AG04450 (cell line): ENCODE measurements at regions of chr16 and their contacts with region 1.

Region 1: DNA sequence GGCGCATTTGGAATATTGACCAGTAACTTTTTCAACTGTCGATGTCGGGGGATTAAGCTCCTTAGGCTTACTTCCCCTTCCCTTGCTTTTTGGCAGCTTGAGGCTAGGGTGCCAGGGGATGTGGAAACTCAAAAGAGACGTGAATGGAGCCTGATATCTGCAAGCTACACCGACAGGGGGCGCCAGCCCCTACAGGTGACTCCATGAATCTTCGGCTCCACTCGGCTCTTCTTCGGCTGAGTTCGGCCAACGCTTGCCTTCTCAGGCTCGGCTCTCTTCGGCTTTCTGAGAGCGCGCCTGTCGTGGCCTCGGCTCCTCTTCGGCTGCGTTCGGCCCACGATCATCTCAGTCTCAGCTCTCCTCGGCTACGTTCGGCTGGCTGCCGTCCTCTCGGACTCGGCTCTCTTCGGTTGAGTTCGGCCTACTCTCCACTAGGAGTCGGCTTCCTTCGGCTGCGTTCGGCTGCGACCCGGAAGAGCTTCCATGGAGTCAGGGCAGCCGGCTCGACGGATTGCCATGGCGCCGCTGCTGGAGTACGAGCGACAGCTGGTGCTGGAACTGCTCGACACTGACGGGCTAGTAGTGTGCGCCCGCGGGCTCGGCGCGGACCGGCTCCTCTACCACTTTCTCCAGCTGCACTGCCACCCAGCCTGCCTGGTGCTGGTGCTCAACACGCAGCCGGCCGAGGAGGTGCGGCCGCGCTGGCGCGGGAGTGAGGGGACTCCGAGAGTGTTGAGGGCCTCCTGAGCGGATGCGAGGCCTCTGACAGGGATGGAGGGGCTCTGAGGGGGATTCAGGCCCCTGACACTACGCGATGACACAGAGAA is at the start of gene ERCC4:
- DNase-seq: peak; percentile 99
- H3K4me3 ChIP-seq: peak within 1 kb of the TSS; percentile 98
- H3K27ac ChIP-seq: peak within 1 kb of the TSS; percentile 66
- H3K27me3 ChIP-seq: no peaks in the 10 kb centered on the region
- CTCF ChIP-seq: peak; percentile 94
- polyA plus RNA-seq, gene ERCC4: 9.8 and 11.4 TPM in 2 replicates

Region 2: DNA sequence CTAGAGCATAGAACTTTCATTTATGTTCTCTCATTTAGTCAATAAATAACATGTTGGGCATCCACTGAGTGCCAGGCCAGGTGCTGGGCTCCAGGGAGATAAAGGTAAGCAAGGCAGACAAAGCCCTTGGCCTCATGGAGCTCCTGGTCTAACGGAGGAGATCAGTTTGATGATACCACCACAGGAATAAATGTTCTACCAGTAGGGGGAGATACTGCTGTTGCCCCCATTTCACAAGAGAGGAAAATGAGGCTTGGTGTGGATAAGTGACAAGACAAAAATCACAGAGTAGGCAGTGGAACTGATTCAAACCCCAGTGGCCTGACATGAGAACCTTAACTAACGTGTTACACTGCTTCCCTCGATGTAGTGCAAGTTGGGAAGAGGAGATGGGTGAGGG is 80.3 kb before region 1 on chr16:
- CTCF ChIA-PET with region 1: no interaction called
- POLR2A ChIA-PET with region 1: no interaction called
- DNase-seq: no peak
- H3K4me3 ChIP-seq: no peak overlapping the region
- H3K27ac ChIP-seq: no peak overlapping the region
- H3K27me3 ChIP-seq: no peaks in the 10 kb centered on the region
- CTCF ChIP-seq: no peak

Region 3: GRCh38 chr16:13902677-13903076 is 17.2 kb before region 1 on chr16:
- CTCF ChIA-PET with region 1: interaction called, 66 read pairs
- POLR2A ChIA-PET with region 1: no interaction called
- DNase-seq: no peak
- H3K4me3 ChIP-seq: no peak overlapping the region
- H3K27ac ChIP-seq: no peak overlapping the region
- H3K27me3 ChIP-seq: peaks cover 2% of the 10 kb centered on the region
- CTCF ChIP-seq: no peak

Region 4: DNA sequence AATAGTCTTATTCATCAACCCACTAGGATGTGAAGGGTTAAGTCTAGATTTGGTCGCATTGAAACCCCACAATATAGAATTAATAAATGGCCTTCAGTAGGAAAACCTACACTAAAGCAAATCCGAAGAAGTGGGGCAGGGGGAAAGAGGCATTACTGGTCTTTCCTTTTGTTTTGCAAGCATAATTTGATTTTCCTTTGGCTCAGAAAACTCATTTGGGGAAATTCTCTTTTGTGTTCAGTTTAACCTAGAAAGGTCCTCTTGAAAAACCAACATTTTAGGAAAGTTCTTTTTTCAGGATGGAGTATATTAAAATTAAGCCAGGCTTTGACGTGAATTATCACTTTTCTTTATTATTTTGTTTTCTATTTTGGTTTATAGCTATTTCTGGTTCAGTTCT is 31.7 kb after region 1 on chr16:
- CTCF ChIA-PET with region 1: interaction called, 17 read pairs
- POLR2A ChIA-PET with region 1: no interaction called
- DNase-seq: no peak
- H3K4me3 ChIP-seq: no peak overlapping the region
- H3K27ac ChIP-seq: no peak overlapping the region
- H3K27me3 ChIP-seq: no peaks in the 10 kb centered on the region
- CTCF ChIP-seq: no peak

Region 5: DNA sequence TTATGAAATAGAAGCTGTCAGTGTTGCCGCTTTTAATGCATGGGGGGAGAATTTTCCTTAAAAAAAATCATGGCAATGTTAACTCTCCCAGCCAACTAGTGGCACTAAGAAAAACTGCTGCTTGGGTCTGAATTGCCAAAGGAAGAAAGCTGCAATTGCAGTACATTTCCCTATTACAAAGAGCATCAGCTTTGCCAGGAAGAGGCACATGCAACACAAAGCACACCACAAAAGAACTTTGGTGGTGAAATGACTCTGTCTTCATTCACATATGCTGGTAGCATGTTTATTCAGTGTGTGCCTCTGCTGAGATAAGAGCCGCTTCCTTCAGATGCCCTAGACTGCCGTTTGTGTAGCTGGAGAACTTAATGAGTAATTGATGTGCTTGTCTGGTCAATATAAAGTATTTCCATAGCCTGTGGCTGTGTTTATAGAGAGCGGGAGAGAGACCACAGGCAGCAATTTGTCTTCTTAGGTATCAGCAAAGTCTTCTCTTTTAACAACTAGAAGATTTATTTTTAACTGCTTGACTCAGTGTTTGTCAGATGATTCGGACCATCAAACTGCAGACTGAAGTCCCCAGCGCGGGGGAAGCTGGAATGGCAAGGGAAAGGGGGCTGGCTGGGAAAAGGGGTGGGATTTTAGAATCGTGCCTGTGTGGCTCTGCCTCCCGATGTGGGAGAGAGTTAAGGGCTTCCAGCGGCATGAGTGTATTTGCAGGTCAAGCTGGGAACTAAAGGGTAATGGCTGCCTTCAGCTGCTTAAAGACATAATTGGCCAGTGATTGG is 266.3 kb after region 1 on chr16:
- CTCF ChIA-PET with region 1: interaction called, 13 read pairs
- POLR2A ChIA-PET with region 1: no interaction called
- DNase-seq: peak; percentile 36
- H3K4me3 ChIP-seq: peak overlapping the region; percentile 43
- H3K27ac ChIP-seq: peak overlapping the region; percentile 59
- H3K27me3 ChIP-seq: no peaks in the 10 kb centered on the region
- CTCF ChIP-seq: peak; percentile 69

Region 6: GRCh38 chr16:14232106-14232864 is 312.4 kb after region 1 on chr16:
- CTCF ChIA-PET with region 1: interaction called, 12 read pairs
- POLR2A ChIA-PET with region 1: no interaction called
- DNase-seq: peak; percentile 45
- H3K4me3 ChIP-seq: no peak overlapping the region
- H3K27ac ChIP-seq: no peak overlapping the region
- H3K27me3 ChIP-seq: no peaks in the 10 kb centered on the region
- CTCF ChIP-seq: no peak

Region 7: GRCh38 chr16:14285513-14286385 is 365.9 kb after region 1 on chr16:
- CTCF ChIA-PET with region 1: interaction called, 18 read pairs
- POLR2A ChIA-PET with region 1: interaction called, 3 read pairs
- DNase-seq: peak; percentile 95
- H3K4me3 ChIP-seq: peak overlapping the region; percentile 81
- H3K27ac ChIP-seq: peak overlapping the region; percentile 47
- H3K27me3 ChIP-seq: no peaks in the 10 kb centered on the region
- CTCF ChIP-seq: no peak